ENCODE measurements at regions of chr15 and their contacts with region 1.

Region 1: GRCh38 chr15:70344666-70345065 is 246.9 kb upstream of the TLE3 start:
- DNase-seq: no peak
- ATAC-seq: no peak
- H3K4me3 Mint-ChIP-seq: no peak overlapping the region
- H3K27ac Mint-ChIP-seq: no peak overlapping the region
- H3K4me1 Mint-ChIP-seq: peaks cover 11% of the 10 kb centered on the region
- H3K27me3 Mint-ChIP-seq: no peaks in the 10 kb centered on the region
- CTCF ChIP-seq: no peak

Region 2: DNA sequence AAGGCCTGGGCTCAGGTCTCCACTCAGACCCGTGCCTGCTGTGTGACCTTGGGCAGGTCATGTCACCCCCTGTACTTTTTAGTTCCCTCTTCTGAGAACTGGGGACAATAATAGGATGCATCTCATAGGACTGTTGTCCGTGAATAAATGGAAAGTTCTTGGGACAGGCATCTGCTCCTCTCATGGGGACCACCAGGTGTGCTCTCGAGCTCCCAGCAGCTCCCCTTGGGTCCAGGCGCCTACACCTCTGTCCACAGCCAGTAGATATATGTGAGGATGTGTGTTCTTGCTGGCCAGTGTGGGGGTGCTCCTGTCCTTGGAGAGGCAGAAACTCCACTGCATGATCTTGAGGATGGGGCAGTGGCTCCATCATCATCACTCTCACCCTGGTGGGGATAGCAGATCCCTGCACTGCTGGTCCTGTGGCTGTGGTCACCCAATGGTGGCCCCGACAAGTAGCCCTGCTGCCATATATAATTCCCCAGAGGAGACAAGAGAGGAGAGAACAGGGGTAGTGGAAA is 10.7 kb after region 1 on chr15:
- CTCF ChIA-PET with region 1: interaction called, 11 read pairs
- POLR2A ChIA-PET with region 1: no interaction called
- DNase-seq: no peak
- ATAC-seq: peak; percentile 51
- H3K4me3 Mint-ChIP-seq: no peak overlapping the region
- H3K27ac Mint-ChIP-seq: no peak overlapping the region
- H3K4me1 Mint-ChIP-seq: no peaks in the 10 kb centered on the region; the same call in 1 of the 2 replicates
- H3K27me3 Mint-ChIP-seq: no peaks in the 10 kb centered on the region
- CTCF ChIP-seq: no peak

Measured in WTC11 (cell line).